Natural killer cell (primary cell): ENCODE measurements at regions of chr3 and their contacts with region 1.

Region 1: DNA sequence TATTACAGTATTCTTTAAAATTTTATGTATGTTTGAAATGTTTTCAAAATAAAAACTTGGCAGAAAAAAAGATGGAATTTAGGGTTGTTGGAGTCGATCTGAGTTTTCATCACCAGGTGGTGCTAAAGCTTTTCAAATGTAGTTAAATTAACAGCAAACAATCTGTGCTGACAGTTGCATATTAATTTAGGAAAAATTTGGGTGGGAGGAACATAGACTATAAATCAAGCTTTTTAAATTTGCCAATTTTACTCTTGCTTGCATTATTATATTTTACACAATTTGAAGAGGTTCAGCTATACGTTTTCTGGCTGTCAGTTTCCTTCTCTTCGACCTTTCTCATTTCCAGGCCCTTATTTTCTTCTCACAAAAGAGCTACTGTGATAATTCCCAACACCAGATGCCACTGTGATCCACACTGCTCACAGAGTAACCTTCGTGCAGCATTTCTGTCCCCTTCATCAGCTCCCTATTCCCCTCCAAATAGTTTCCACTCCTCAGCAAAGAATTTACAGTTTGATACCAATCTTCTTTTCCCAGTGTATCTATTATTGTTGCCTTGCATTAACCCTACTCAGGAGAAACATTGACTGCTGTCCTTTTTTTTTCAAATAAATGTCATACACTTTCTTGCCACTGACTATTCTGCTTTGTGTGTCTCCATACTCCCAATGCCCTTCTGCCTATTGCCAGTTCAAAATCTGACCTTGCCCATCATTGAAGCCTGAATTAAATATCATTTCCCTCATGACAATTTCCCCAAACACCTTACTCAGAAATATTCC is 53.4 kb upstream of the EIF5A2 start:
- DNase-seq: peak in 1 of 2 donors; percentile 52
- ATAC-seq: no peak
- H3K4me3 ChIP-seq: no peak overlapping the region
- H3K4me3 Mint-ChIP-seq: no peak overlapping the region
- H3K27ac ChIP-seq: no peak overlapping the region
- H3K27ac Mint-ChIP-seq: no peak overlapping the region
- H3K4me1 ChIP-seq: no peaks in the 10 kb centered on the region
- H3K4me1 Mint-ChIP-seq: peaks cover 0 to 10% of the 10 kb centered on the region in 2 donors
- H3K27me3 ChIP-seq: peaks cover 2% of the 10 kb centered on the region
- H3K27me3 Mint-ChIP-seq: peaks cover 3 to 8% of the 10 kb centered on the region in 2 donors
- CTCF ChIP-seq: peak; percentile 64

Region 2: GRCh38 chr3:171049861-171050444 is 88.1 kb after region 1 on chr3:
- intact Hi-C with region 1: loop called (anchors 1 kb)
- DNase-seq: peak in 1 of 2 donors; percentile 57
- ATAC-seq: peak; percentile 49 to 79 (median 66)
- H3K4me3 ChIP-seq: no peak overlapping the region
- H3K4me3 Mint-ChIP-seq: no peak overlapping the region
- H3K27ac ChIP-seq: no peak overlapping the region
- H3K27ac Mint-ChIP-seq: no peak overlapping the region
- H3K4me1 ChIP-seq: no peaks in the 10 kb centered on the region
- H3K4me1 Mint-ChIP-seq: no peaks in the 10 kb centered on the region
- H3K27me3 ChIP-seq: no peaks in the 10 kb centered on the region
- H3K27me3 Mint-ChIP-seq: peaks cover 8 to 13% of the 10 kb centered on the region in 2 donors
- CTCF ChIP-seq: peak; percentile 31

Region 3: DNA sequence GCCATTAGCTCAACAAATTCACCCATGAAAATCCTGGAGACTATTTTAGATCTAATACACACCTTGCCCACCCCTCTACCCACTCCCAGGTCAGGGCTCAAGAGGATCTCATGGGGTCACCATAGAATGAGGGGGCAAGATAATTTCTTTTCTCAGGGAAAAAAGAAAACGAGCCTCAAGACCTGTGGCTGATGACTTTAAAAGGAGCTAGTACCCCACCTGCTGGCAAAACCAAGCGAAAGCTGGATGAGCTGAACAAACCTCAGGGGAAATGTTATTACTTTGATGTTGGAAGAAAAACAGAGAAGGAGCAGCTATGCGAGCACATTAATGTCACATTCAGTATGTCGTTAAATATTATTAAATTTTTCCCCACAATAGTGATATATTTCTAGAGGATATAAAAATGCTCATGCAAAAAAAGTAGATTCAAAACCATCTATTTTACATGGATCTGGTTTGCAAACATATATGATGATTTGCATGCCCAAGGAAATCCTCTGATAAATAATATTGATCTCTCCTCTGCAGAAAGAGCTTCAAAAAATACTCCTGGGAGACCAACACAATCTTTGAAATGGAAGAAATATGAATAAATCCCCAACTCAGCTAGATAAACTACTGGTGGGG is 810.7 kb after region 1 on chr3:
- intact Hi-C with region 1: loop called (anchors 2 kb)
- DNase-seq: peak in 1 of 2 donors; percentile 66
- ATAC-seq: peak in 1 of 3 donors; percentile 61
- H3K4me3 ChIP-seq: no peak overlapping the region
- H3K4me3 Mint-ChIP-seq: no peak overlapping the region
- H3K27ac ChIP-seq: no peak overlapping the region
- H3K27ac Mint-ChIP-seq: no peak overlapping the region
- H3K4me1 ChIP-seq: peaks cover 4% of the 10 kb centered on the region
- H3K4me1 Mint-ChIP-seq: peaks cover 22 to 28% of the 10 kb centered on the region in 2 donors
- H3K27me3 ChIP-seq: no peaks in the 10 kb centered on the region
- H3K27me3 Mint-ChIP-seq: no peaks in the 10 kb centered on the region
- CTCF ChIP-seq: peak; percentile 69